B cell (primary cell): ENCODE measurements at regions of chr13 and their contacts with region 1.

Region 1: GRCh38 chr13:20160847-20161274 is at the start of gene GJA3:
- DNase-seq: peak; percentile 80
- ATAC-seq: peak; percentile 67
- H3K4me3 ChIP-seq: peak within 1 kb of the TSS in 4 of 5 experiments; percentile 44 to 66 (median 60)
- H3K4me3 Mint-ChIP-seq: peak within 1 kb of the TSS; percentile 89
- H3K27ac ChIP-seq: peak within 1 kb of the TSS in 1 of 2 donors; percentile 91
- H3K27ac Mint-ChIP-seq: peak within 1 kb of the TSS; percentile 80
- H3K4me1 ChIP-seq: peaks cover 15 to 20% of the 10 kb centered on the region in 2 donors
- H3K4me1 Mint-ChIP-seq: peaks cover 24% of the 10 kb centered on the region
- H3K27me3 ChIP-seq: peaks cover 0 to 3% (median 1%) of the 10 kb centered on the region in 4 experiments
- H3K27me3 Mint-ChIP-seq: peaks cover 16% of the 10 kb centered on the region
- CTCF ChIP-seq: no peak
- total RNA-seq, gene GJA3: 0.59 and 0.68 TPM in 2 replicates

Region 2: DNA sequence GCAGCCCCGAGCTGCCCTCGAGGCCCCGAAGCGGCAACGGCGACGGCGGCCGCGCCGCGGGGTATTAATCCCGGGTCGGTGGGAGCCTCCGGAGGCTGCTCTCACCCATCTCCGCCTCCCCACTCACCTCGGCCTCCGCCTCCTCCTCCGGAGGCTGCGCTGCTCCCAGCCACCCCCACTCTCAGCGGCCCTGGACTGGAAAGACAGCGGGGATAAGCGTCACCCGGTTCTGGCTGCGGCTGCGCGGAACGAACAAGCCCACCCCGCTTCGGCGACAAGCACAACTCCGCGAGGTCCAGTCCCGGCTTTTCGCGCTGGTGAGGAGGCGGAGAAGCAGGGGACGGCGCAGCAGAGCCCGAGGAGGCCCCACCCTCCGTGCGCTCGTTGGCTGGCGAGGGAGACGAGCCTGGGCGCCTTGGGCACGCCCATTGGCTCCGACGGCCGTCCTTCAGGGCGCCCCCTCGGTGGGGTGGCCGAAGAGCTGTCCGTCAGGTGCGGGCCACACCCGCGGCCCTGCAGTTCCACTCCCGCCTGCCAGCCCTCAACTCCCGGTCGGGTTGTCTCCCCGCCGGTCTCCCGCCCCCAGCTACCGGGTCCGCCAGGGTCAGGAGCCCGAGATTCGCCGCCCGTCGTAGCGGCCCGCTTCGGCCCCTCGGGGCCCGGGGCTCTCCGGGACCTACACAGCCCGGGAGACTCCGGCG is 297.4 kb before region 1 on chr13 and contains the start of gene ZMYM5:
- CTCF ChIA-PET with region 1: no interaction called
- POLR2A ChIA-PET with region 1: no interaction called
- intact Hi-C with region 1: loop called (anchors 5 kb)
- DNase-seq: peak; percentile 97
- ATAC-seq: peak; percentile 88
- H3K4me3 ChIP-seq: peak within 1 kb of the TSS; percentile 71 to 95 (median 83)
- H3K4me3 Mint-ChIP-seq: peak within 1 kb of the TSS; percentile 93
- H3K27ac ChIP-seq: peak within 1 kb of the TSS; percentile 92 to 94
- H3K27ac Mint-ChIP-seq: peak within 1 kb of the TSS; percentile 97
- H3K4me1 ChIP-seq: peaks cover 22 to 26% of the 10 kb centered on the region in 2 donors
- H3K4me1 Mint-ChIP-seq: peaks cover 31% of the 10 kb centered on the region
- H3K27me3 ChIP-seq: no peaks in the 10 kb centered on the region
- H3K27me3 Mint-ChIP-seq: no peaks in the 10 kb centered on the region
- CTCF ChIP-seq: no peak
- total RNA-seq, gene ZMYM5: 23.0 and 26.8 TPM in 2 replicates

Region 3: GRCh38 chr13:19959831-19960652 is 200.8 kb before region 1 on chr13:
- CTCF ChIA-PET with region 1: interaction called, 3 read pairs
- POLR2A ChIA-PET with region 1: no interaction called
- intact Hi-C with region 1: loop called (anchors 1 kb)
- DNase-seq: peak; percentile 92
- ATAC-seq: peak; percentile 44
- H3K4me3 ChIP-seq: peak overlapping the region; percentile 78 to 90 (median 85)
- H3K4me3 Mint-ChIP-seq: peak overlapping the region; percentile 99
- H3K27ac ChIP-seq: peak overlapping the region; percentile 90 to 96
- H3K27ac Mint-ChIP-seq: peak overlapping the region; percentile 99
- H3K4me1 ChIP-seq: peaks cover 8 to 15% of the 10 kb centered on the region in 2 donors
- H3K4me1 Mint-ChIP-seq: peaks cover 31% of the 10 kb centered on the region
- H3K27me3 ChIP-seq: no peaks in the 10 kb centered on the region
- H3K27me3 Mint-ChIP-seq: no peaks in the 10 kb centered on the region
- CTCF ChIP-seq: peak; percentile 87

Region 4: DNA sequence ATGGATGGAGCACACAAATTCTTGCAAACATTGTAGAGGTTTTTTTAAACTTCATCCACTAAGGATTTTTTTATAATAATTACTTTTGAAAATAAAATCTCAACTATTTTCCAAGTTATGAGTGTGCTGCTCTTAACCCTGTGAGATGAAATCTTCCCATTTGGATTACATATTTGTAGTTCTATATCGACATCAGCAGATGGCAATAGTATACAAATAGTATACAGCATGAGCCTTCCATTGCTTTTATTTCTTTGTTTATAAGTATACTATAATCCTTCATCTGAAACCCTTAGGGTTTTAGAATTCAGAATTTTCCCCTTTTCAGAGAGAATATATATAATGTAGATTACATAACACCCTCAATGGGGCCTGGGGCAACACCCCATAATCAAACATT is 70.5 kb before region 1 on chr13:
- CTCF ChIA-PET with region 1: no interaction called
- POLR2A ChIA-PET with region 1: no interaction called
- intact Hi-C with region 1: loop called (anchors 1 kb)
- DNase-seq: peak; percentile 7
- ATAC-seq: no peak
- H3K4me3 ChIP-seq: no peak overlapping the region
- H3K4me3 Mint-ChIP-seq: no peak overlapping the region
- H3K27ac ChIP-seq: no peak overlapping the region
- H3K27ac Mint-ChIP-seq: no peak overlapping the region
- H3K4me1 ChIP-seq: no peaks in the 10 kb centered on the region
- H3K4me1 Mint-ChIP-seq: no peaks in the 10 kb centered on the region
- H3K27me3 ChIP-seq: no peaks in the 10 kb centered on the region
- H3K27me3 Mint-ChIP-seq: no peaks in the 10 kb centered on the region
- CTCF ChIP-seq: no peak